ENCODE measurements at regions of chr19 and their contacts with region 1.

Region 1: GRCh38 chr19:17985037-17985818 is 18.3 kb downstream of the KCNN1 start:
- DNase-seq: no peak
- ATAC-seq: peak in 1 of 4 donors; percentile 21
- H3K4me3 ChIP-seq: no peak overlapping the region
- H3K27ac ChIP-seq: no peak overlapping the region
- H3K4me1 ChIP-seq: no peaks in the 10 kb centered on the region
- H3K27me3 ChIP-seq: peaks cover 0 to 33% (median 6%) of the 10 kb centered on the region in 9 donors
- CTCF ChIP-seq: no peak
- POLR2A ChIP-seq: no peak

Region 2: DNA sequence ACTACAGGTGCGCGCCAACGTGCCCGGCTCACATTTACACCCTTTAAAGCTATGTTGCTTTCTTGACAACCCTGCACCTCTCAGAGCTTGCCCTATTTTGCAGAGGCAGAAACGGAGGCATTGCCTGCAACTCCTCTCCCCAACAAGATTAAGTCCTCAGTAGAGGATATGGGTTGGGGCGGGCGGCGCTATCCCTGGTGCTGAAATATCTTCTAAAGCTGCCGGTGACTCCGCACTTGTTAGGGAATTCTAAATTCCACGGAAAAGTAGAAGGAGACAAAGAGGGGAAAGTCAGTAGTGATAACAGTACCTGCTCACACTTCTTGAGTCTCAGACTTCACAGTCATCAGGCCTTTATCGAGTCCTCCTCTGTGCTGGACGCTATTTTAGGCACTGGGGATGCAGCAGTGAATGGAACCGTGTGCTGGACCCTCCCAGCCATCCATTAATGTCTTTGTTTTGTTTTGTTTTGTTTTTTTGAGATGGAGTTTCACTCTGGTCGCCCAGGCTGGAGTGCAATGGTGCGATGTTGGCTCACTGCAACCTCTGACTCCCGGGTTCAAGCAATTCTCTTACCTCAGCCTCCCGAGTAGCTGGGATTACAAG is 95.5 kb before region 1 on chr19:
- intact Hi-C with region 1: loop called in 1 of 10 experiments (anchors 10 kb)
- DNase-seq: no peak
- ATAC-seq: no peak
- H3K4me3 ChIP-seq: no peak overlapping the region
- H3K27ac ChIP-seq: no peak overlapping the region
- H3K4me1 ChIP-seq: no peaks in the 10 kb centered on the region
- H3K27me3 ChIP-seq: peaks cover 0 to 27% (median 6%) of the 10 kb centered on the region in 9 donors
- CTCF ChIP-seq: no peak
- POLR2A ChIP-seq: no peak